Left cardiac atrium (tissue), 4 donors: ENCODE measurements at regions of chr2 and their contacts with region 1.

Region 1: GRCh38 chr2:28855193-28855592 is 14.9 kb downstream of the TRMT61B start:
- DNase-seq: no peak
- ATAC-seq: no peak

Region 2: GRCh38 chr2:28780496-28780895 is 74.7 kb before region 1 on chr2:
- intact Hi-C with region 1: loop called in 1 of 2 experiments (anchors 10 kb)
- DNase-seq: no peak
- ATAC-seq: no peak

Region 3: DNA sequence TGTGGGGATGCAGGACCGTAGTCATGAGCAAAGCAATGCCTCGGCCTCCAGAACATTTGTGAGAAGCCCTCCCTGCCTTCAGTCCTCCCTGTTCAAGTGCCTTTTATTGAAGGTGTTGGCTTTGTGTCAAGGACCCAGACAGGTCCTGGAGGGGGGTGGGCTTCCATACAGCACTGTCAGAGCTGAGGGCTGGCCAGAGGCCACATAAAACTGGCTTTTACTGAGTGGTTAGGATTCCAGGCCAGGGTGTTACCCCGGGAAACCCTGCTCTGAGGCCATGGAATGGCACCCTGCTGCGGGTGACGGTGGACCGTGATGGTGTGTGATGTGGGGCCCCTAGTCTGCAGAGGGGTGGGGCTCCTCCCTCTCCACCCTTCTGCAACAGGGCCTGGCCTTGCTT is 167.5 kb after region 1 on chr2:
- intact Hi-C with region 1: no loop called
- DNase-seq: no peak
- ATAC-seq: no peak